Right ventricle myocardium superior (tissue), 1 donor: ENCODE measurements at regions of chr12 and their contacts with region 1.

Region 1: DNA sequence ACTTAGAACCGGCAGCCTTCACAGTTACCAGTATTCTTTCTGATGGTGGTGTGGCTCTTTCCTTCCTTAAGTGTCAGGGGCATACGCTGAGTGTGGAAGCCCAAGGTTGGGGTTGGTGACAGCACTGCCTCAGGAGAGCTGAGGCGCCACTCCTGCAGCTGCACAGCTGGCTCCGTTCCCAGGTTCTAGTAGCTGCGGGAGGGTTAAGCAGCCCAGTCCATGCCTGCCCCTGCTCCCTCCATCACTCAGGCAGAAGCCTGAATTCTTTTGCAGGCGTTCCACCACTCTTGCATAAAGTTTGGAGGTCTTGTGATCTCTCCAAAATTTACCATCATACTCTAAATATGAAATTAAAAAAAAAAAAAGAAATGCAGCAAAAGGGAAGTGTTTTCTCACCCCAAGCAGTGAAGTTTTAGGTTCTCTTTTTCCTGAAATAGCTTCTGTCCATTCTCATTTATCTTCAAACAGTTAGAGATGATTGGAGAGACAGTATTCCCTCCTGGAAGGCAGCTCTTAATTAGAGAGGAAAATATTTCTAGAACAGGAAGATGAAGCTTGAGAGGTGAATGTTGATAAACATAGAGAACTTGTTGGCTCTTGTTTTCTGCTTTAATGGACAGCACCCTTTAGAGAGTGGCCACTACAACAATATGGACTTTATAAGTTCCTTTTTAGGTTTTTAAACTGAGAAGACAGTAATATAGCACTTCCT is 136.1 kb downstream of the FGD4 start:
- DNase-seq: peak; percentile 90
- ATAC-seq: peak; percentile 95

Region 2: GRCh38 chr12:32462908-32463307 is 72.5 kb before region 1 on chr12:
- intact Hi-C with region 1: loop called (anchors 5 kb)
- DNase-seq: no peak
- ATAC-seq: no peak

Region 3: DNA sequence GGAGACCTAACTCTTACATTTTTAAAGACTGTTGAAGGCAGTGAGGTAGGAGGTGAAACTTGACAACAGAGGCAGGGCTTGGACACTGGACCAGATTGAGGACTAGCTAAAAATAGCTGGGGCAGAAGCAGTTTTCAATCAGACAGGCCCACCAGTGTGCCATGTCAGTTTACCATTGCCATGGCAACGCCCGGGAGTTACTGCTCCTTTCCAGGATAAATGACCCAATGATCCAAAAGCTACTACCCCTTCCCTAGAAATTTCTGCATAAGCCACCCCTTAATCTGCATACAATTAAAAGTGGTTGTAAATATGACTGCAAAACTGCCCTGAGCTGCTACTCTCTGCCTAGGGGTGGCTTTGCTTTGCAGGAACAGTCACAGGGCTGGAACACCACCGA is 414.4 kb after region 1 on chr12:
- intact Hi-C with region 1: no loop called
- DNase-seq: no peak
- ATAC-seq: no peak